CD14-positive monocyte (primary cell): ENCODE measurements at regions of chr10 and their contacts with region 1.

Region 1: GRCh38 chr10:28532383-28533175 is at the start of gene WAC:
- DNase-seq: peak; percentile 93 to 96 (median 94)
- H3K4me3 ChIP-seq: peak within 1 kb of the TSS; percentile 78 to 95 (median 92)
- H3K4me3 Mint-ChIP-seq: peak within 1 kb of the TSS; percentile 91 to 96
- H3K27ac ChIP-seq: peak within 1 kb of the TSS; percentile 98 to 99
- H3K27ac Mint-ChIP-seq: peak within 1 kb of the TSS; percentile 99 to 100 (median 100)
- H3K4me1 ChIP-seq: peaks cover 16 to 38% of the 10 kb centered on the region in 2 donors
- H3K4me1 Mint-ChIP-seq: peaks cover 50% of the 10 kb centered on the region
- H3K27me3 ChIP-seq: no peaks in the 10 kb centered on the region
- H3K27me3 Mint-ChIP-seq: no peaks in the 10 kb centered on the region
- CTCF ChIP-seq: peak; percentile 16
- polyA plus RNA-seq, gene WAC: 46.7 to 80.8 (median 67.9) TPM

Region 2: GRCh38 chr10:28432210-28432676 is 100.3 kb before region 1 on chr10:
- intact Hi-C with region 1: loop called in 1 of 2 experiments (anchors 5 kb)
- DNase-seq: peak; percentile 85 to 94 (median 91)
- H3K4me3 ChIP-seq: peak overlapping the region in 1 of 3 experiments; percentile 59
- H3K4me3 Mint-ChIP-seq: peak overlapping the region in 1 of 2 donors; percentile 57
- H3K27ac ChIP-seq: no peak overlapping the region
- H3K27ac Mint-ChIP-seq: peak overlapping the region; percentile 41 to 82 (median 67)
- H3K4me1 ChIP-seq: peaks cover 4 to 15% of the 10 kb centered on the region in 2 donors
- H3K4me1 Mint-ChIP-seq: peaks cover 16% of the 10 kb centered on the region
- H3K27me3 ChIP-seq: no peaks in the 10 kb centered on the region
- H3K27me3 Mint-ChIP-seq: peaks cover 1 to 2% (median 2%) of the 10 kb centered on the region in 3 donors
- CTCF ChIP-seq: peak; percentile 88

Region 3: GRCh38 chr10:28492116-28492920 is 40.3 kb before region 1 on chr10:
- intact Hi-C with region 1: loop called in 1 of 2 experiments (anchors 5 kb)
- DNase-seq: peak; percentile 49 to 68 (median 59)
- H3K4me3 ChIP-seq: peak overlapping the region; percentile 32 to 71 (median 61)
- H3K4me3 Mint-ChIP-seq: peak overlapping the region; percentile 73 to 90
- H3K27ac ChIP-seq: peak overlapping the region; percentile 88 to 89
- H3K27ac Mint-ChIP-seq: peak overlapping the region; percentile 93 to 97 (median 96)
- H3K4me1 ChIP-seq: peaks cover 60 to 87% of the 10 kb centered on the region in 2 donors
- H3K4me1 Mint-ChIP-seq: peaks cover 82% of the 10 kb centered on the region
- H3K27me3 ChIP-seq: no peaks in the 10 kb centered on the region
- H3K27me3 Mint-ChIP-seq: peaks cover 0 to 4% (median 2%) of the 10 kb centered on the region in 3 donors
- CTCF ChIP-seq: no peak

Region 4: GRCh38 chr10:28587970-28588290 is 55.4 kb after region 1 on chr10:
- intact Hi-C with region 1: loop called in 1 of 2 experiments (anchors 10 kb)
- DNase-seq: peak in 2 of 3 donors; percentile 25 to 36
- H3K4me3 ChIP-seq: peak overlapping the region in 1 of 3 experiments; percentile 0
- H3K4me3 Mint-ChIP-seq: no peak overlapping the region
- H3K27ac ChIP-seq: peak overlapping the region in 1 of 2 donors; percentile 47
- H3K27ac Mint-ChIP-seq: peak overlapping the region; percentile 60 to 90 (median 80)
- H3K4me1 ChIP-seq: peaks cover 21 to 30% of the 10 kb centered on the region in 2 donors
- H3K4me1 Mint-ChIP-seq: peaks cover 25% of the 10 kb centered on the region
- H3K27me3 ChIP-seq: no peaks in the 10 kb centered on the region
- H3K27me3 Mint-ChIP-seq: peaks cover 0 to 1% (median 0%) of the 10 kb centered on the region in 3 donors
- CTCF ChIP-seq: no peak

Region 5: DNA sequence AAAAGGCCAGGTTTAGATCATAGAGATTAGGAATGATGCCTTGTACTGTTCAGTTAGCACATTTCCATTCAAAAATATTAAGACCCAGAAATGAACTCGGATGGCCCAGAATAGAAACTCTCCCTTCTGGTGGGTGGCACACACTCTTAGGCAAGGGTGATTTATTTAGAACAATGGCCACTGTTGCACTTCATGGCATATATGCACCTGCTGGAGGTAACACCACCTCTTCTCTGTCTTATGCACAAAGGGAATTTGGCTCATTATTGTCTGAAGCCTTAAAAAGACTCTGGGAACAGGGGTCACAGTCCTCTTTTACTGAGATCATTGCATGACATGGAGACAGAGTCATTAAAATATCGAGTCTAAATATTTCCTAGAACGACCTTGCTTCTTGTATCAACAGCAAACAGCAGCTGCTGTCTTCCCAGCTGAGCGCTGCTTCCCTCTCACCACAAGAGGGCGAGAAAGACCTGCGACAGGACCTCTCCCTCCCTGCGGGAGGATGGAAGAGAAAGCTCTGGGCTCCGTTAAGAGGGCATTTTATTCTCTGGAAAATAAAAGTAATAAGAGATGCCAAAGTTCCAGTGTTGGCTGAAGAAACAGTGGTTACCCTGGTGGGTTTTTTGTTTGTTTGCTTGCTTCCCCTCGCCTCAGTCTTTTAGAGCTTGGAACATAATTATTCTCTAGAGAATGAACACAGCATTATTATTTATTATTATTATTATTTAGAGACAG is 131.2 kb after region 1 on chr10:
- intact Hi-C with region 1: no loop called
- DNase-seq: peak; percentile 46 to 69 (median 61)
- H3K4me3 ChIP-seq: no peak overlapping the region
- H3K4me3 Mint-ChIP-seq: no peak overlapping the region
- H3K27ac ChIP-seq: no peak overlapping the region
- H3K27ac Mint-ChIP-seq: no peak overlapping the region
- H3K4me1 ChIP-seq: peaks cover 3% of the 10 kb centered on the region in 2 donors
- H3K4me1 Mint-ChIP-seq: peaks cover 8% of the 10 kb centered on the region
- H3K27me3 ChIP-seq: peaks cover 15 to 37% of the 10 kb centered on the region in 2 donors
- H3K27me3 Mint-ChIP-seq: peaks cover 42 to 55% (median 44%) of the 10 kb centered on the region in 3 donors
- CTCF ChIP-seq: peak; percentile 96

Region 6: DNA sequence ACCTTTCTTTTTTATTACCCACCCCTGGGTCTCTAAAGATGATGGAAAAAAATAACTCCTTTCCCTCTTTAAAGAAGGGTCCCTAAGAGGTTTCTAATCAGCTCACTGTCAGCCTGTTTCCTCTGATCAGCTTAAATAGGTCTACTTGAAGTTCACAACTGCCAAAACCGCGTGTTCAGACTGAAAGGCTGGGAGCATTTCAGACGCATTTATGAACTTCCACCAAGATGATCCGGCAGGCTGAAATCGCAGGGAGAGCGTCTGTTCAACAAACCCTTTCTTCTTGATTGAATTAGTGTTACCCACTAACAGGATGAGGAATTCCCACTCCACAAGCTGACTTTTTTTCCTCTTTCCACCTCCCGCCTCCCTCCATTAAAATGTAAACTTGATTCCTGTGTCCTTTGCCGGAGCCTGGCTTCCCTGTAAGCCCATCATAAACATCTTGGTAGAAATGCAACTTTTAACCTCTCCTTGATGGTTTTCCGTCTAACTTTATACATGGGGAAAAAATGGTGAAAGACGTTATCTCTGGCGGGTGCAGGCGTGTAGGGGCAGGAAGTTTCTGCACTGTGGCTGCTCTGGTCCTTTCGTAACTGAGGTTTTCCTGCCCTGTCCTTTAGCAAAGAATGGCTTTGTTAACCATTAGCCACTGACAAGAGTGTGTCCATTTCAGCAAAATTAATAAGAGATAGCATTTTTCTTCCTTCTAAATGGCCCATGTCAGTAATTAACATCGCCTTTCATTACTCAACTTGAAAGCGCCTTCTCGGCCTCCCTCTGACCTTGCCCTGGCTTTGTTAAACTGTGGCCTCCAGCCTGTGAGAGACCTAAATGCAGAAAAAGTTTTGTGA is 275.4 kb after region 1 on chr10:
- intact Hi-C with region 1: no loop called
- DNase-seq: no peak
- H3K4me3 ChIP-seq: no peak overlapping the region
- H3K4me3 Mint-ChIP-seq: peak overlapping the region; percentile 44 to 81
- H3K27ac ChIP-seq: no peak overlapping the region
- H3K27ac Mint-ChIP-seq: no peak overlapping the region
- H3K4me1 ChIP-seq: peaks cover 0 to 25% of the 10 kb centered on the region in 2 donors
- H3K4me1 Mint-ChIP-seq: peaks cover 12% of the 10 kb centered on the region
- H3K27me3 ChIP-seq: peaks cover 0 to 2% of the 10 kb centered on the region in 2 donors
- H3K27me3 Mint-ChIP-seq: peaks cover 4 to 13% (median 12%) of the 10 kb centered on the region in 3 donors
- CTCF ChIP-seq: no peak